Psoas muscle (tissue), 8 donors: ENCODE measurements at regions of chr1 and their contacts with region 1.

Region 1: GRCh38 chr1:61056573-61057439 is 25.6 kb upstream of the NFIA start:
- DNase-seq: peak; percentile 62 to 77
- ATAC-seq: peak; percentile 41 to 59 (median 53)
- H3K4me3 ChIP-seq: peak overlapping the region; percentile 84
- H3K27ac ChIP-seq: peak overlapping the region; percentile 97
- H3K4me1 ChIP-seq: peaks cover 30% of the 10 kb centered on the region
- H3K27me3 ChIP-seq: no peaks in the 10 kb centered on the region
- CTCF ChIP-seq: no peak

Region 2: DNA sequence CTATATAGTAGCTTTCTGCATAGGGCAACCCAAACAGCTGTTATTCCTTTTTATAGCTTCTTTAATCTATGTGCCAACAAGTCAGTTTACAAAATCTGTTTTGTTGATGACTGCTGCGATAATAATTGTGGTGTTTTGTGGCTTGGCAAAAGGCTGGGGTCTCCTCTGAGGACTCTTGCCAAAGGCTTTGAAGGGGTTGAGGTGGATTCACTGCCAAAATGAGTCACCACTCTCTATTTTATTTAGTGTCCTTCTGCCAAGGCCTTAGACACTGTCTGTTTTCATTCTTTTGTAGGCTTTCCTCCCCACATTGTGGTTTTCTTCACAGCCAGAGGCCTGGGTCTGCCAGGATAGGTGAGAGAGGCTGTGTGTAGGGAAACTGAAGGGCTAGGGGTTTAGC is 187.3 kb after region 1 on chr1:
- intact Hi-C with region 1: loop called in 1 of 2 experiments (anchors 2 kb)
- DNase-seq: no peak
- ATAC-seq: peak; percentile 42 to 55 (median 44)
- H3K4me3 ChIP-seq: no peak overlapping the region
- H3K27ac ChIP-seq: peak overlapping the region; percentile 93
- H3K4me1 ChIP-seq: peaks cover 66% of the 10 kb centered on the region
- H3K27me3 ChIP-seq: no peaks in the 10 kb centered on the region
- CTCF ChIP-seq: no peak

Region 3: DNA sequence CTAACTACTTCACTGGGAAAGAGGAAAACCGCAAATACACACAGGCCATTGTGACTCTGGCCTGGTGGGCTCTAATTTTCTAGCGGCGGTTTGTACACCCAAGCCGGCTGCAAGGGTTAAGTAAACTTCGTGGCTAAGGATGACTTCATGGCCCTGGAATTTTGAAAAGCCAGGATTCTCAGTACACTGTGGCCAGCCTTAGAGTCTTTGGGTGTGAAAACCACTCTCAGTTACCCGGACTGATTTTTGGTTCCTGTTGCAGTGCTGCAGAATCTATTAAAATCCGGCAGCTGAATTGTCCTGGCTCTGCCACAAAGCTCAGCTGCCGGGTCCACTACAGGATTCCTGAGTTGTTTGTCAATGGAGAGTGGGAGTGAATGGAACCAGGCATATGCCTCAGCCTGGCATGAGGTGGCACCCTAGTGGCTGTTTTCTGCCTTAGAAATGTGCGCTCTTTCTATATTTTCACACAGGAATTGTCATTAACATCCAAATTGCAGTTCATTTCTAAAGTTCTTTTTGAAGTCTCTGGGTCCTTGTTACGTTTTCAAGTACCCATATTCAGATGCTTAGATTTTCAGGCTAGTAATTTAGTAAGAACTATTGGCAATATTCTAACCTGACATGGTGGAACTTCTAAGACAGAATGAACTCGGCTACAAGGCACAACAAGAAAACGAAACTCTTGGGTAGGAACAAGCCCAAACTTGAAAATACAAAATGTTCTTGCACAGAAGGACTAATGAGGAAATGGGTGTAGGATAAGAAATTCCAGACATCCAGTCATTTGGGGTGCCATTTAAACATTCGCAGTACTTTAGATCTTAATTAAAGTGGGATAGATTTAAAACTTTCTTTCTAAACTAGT is 281.4 kb after region 1 on chr1:
- intact Hi-C with region 1: loop called in 1 of 2 experiments (anchors 2 kb)
- DNase-seq: peak; percentile 71 to 84
- ATAC-seq: peak; percentile 88 to 92 (median 92)
- H3K4me3 ChIP-seq: peak overlapping the region; percentile 53
- H3K27ac ChIP-seq: peak overlapping the region; percentile 87
- H3K4me1 ChIP-seq: peaks cover 33% of the 10 kb centered on the region
- H3K27me3 ChIP-seq: no peaks in the 10 kb centered on the region
- CTCF ChIP-seq: peak; percentile 72